Right ventricle myocardium inferior (tissue), 1 donor: ENCODE measurements at regions of chr7 and their contacts with region 1.

Region 1: GRCh38 chr7:47371729-47372368 is 210.1 kb downstream of the TNS3 start:
- DNase-seq: peak; percentile 90
- ATAC-seq: peak; percentile 75

Region 2: GRCh38 chr7:47337531-47337930 is 34.3 kb before region 1 on chr7:
- intact Hi-C with region 1: loop called (anchors 5 kb)
- DNase-seq: no peak
- ATAC-seq: peak; percentile 45

Region 3: GRCh38 chr7:47418601-47419381 is 46.9 kb after region 1 on chr7:
- intact Hi-C with region 1: no loop called
- DNase-seq: no peak
- ATAC-seq: no peak

Region 4: GRCh38 chr7:47571331-47572093 is 199.7 kb after region 1 on chr7:
- intact Hi-C with region 1: no loop called
- DNase-seq: peak; percentile 92
- ATAC-seq: peak; percentile 73